H1 (cell line): ENCODE measurements at regions of chr10 and their contacts with region 1.

Region 1: DNA sequence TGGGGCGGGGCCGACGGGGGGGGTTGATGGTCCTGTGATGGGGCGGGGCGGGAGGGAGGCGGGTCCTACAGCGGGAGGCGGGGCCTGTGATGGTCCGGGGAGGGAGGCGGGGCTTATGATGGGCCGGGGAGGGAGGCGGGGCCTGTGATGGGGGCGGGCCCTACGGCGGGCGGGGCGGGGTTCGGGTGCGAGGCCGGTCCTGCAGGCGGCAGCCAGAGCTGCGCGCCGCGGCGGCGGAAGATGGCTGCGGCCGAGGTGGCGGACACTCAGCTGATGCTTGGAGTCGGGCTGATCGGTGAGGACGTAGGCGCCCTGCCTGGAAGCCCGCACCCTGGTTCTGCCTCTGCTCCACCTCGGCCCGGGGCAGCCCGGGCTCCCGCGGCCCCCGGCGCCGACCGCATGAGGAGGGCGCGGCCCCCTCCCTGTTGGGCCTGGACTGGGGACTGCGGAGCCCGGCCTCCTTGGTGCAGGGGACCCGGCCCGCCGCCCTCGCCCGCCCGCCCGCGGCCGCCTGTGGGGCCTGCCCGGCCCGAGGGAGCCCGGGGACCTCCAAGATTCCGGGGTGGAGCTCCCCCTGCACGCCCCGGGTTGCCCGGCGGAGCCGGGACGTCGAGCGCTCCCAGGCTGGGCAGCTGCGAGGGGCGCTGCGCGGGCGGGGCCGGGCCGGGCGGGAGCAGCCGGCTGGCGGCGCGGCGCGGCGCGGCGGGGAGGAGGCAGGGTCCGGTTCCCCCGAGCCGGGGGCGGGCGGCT is at the start of gene DENND10:
- DNase-seq: peak; percentile 47 to 83
- H3K4me3 ChIP-seq: peak within 1 kb of the TSS; percentile 68 to 93 (median 88)
- H3K27ac ChIP-seq: peak within 1 kb of the TSS; percentile 58; the same call in 1 of the 2 replicates
- H3K4me1 ChIP-seq: peaks cover 0 to 3% (median 0%) of the 10 kb centered on the region in 4 experiments; a peak in 1 of 7 replicates
- H3K27me3 ChIP-seq: no peaks in the 10 kb centered on the region
- CTCF ChIP-seq: no peak
- EP300 ChIP-seq: no peak
- POLR2A ChIP-seq: peak; percentile 90 to 91
- RAD21 ChIP-seq: no peak
- total RNA-seq, gene DENND10: 61.6 and 64.4 TPM in 2 replicates

Region 2: GRCh38 chr10:119090968-119091367 is 13.1 kb before region 1 on chr10:
- CTCF ChIA-PET with region 1: no interaction called
- POLR2A ChIA-PET with region 1: interaction called, 11 read pairs
- DNase-seq: no peak
- H3K4me3 ChIP-seq: no peak overlapping the region
- H3K27ac ChIP-seq: no peak overlapping the region
- H3K4me1 ChIP-seq: no peaks in the 10 kb centered on the region
- H3K27me3 ChIP-seq: no peaks in the 10 kb centered on the region
- CTCF ChIP-seq: no peak
- EP300 ChIP-seq: no peak
- POLR2A ChIP-seq: no peak
- RAD21 ChIP-seq: no peak